GM10248 (cell line): ENCODE measurements at regions of chr18 and their contacts with region 1.

Region 1: GRCh38 chr18:56702946-56703345 is 51.8 kb downstream of the WDR7 start:
- DNase-seq: peak; percentile 23
- CTCF ChIP-seq: peak; percentile 39

Region 2: GRCh38 chr18:56684277-56684676 is 18.7 kb before region 1 on chr18:
- CTCF ChIA-PET with region 1: interaction called, 20 read pairs
- POLR2A ChIA-PET with region 1: no interaction called
- DNase-seq: no peak
- CTCF ChIP-seq: no peak

Region 3: GRCh38 chr18:56715121-56715520 is 12.2 kb after region 1 on chr18:
- CTCF ChIA-PET with region 1: interaction called, 10 read pairs
- POLR2A ChIA-PET with region 1: no interaction called
- DNase-seq: no peak
- CTCF ChIP-seq: no peak

Region 4: GRCh38 chr18:57446322-57446721 is 743.4 kb after region 1 on chr18:
- CTCF ChIA-PET with region 1: interaction called, 11 read pairs
- POLR2A ChIA-PET with region 1: no interaction called
- DNase-seq: no peak
- CTCF ChIP-seq: peak; percentile 70